Endothelial cell of umbilical vein (primary cell): ENCODE measurements at regions of chr6 and their contacts with region 1.

Region 1: GRCh38 chr6:110682460-110682853 is 132.8 kb downstream of the CDK19 start:
- DNase-seq: peak; percentile 84
- H3K4me3 ChIP-seq: no peak overlapping the region
- H3K27ac ChIP-seq: no peak overlapping the region
- H3K4me1 ChIP-seq: peaks cover 6% of the 10 kb centered on the region
- H3K27me3 ChIP-seq: peaks cover 0 to 1% of the 10 kb centered on the region in 2 experiments
- CTCF ChIP-seq: peak; percentile 37 to 54
- POLR2A ChIP-seq: no peak

Region 2: GRCh38 chr6:110456694-110457093 is 225.8 kb before region 1 on chr6:
- CTCF ChIA-PET with region 1: interaction called, 9 read pairs
- POLR2A ChIA-PET with region 1: no interaction called
- dilution Hi-C with region 1: no loop called
- intact Hi-C with region 1: loop called (anchors 5 kb)
- DNase-seq: no peak
- H3K4me3 ChIP-seq: no peak overlapping the region
- H3K27ac ChIP-seq: no peak overlapping the region
- H3K4me1 ChIP-seq: no peaks in the 10 kb centered on the region
- H3K27me3 ChIP-seq: peaks cover 5 to 22% of the 10 kb centered on the region in 2 experiments
- CTCF ChIP-seq: no peak
- POLR2A ChIP-seq: no peak

Region 3: GRCh38 chr6:110949679-110950285 is 267.3 kb after region 1 on chr6:
- CTCF ChIA-PET with region 1: interaction called, 37 read pairs
- POLR2A ChIA-PET with region 1: no interaction called
- dilution Hi-C with region 1: no loop called
- intact Hi-C with region 1: loop called (anchors 1 kb)
- DNase-seq: peak; percentile 41
- H3K4me3 ChIP-seq: no peak overlapping the region
- H3K27ac ChIP-seq: no peak overlapping the region
- H3K4me1 ChIP-seq: no peaks in the 10 kb centered on the region
- H3K27me3 ChIP-seq: peaks cover 0 to 3% of the 10 kb centered on the region in 2 experiments
- CTCF ChIP-seq: peak in 1 of 2 donors; percentile 26
- POLR2A ChIP-seq: no peak

Region 4: DNA sequence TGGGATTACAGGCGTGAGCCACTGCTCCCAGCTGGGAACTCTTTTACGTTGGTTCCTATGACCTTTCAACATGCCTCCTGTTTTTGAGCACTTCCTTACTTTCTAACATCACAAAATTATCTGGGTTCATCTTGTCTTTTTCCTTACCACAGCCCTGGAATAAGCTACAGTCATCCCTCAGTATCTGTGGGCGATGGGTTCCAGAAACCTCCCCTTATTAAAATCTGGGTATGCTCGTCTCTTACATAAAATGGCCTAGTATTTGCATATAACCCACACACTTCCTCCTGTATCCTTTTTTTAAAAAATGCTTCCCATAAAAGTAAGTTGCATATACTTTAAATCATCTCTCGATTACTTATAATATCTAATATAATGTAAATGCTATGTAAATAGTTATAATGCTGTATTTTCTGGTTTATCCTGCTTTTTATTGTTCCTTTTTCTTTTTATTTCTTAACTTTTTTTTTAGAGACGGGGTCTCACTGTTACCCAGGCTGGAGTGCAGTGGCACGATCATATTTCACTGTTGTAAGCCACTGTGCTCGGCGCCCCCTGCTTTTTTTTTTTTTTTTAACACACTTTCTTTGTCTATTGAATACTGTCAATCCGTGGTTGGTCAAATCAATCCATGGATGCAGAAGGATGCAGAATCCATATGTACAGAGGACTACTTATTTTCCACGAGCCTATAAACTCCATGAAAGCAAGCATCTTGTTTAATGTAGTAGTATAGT is 308.6 kb after region 1 on chr6:
- CTCF ChIA-PET with region 1: interaction called, 10 read pairs
- POLR2A ChIA-PET with region 1: no interaction called
- dilution Hi-C with region 1: no loop called
- intact Hi-C with region 1: no loop called
- DNase-seq: no peak
- H3K4me3 ChIP-seq: no peak overlapping the region
- H3K27ac ChIP-seq: no peak overlapping the region
- H3K4me1 ChIP-seq: no peaks in the 10 kb centered on the region
- H3K27me3 ChIP-seq: no peaks in the 10 kb centered on the region
- CTCF ChIP-seq: no peak
- POLR2A ChIP-seq: no peak

Region 5: DNA sequence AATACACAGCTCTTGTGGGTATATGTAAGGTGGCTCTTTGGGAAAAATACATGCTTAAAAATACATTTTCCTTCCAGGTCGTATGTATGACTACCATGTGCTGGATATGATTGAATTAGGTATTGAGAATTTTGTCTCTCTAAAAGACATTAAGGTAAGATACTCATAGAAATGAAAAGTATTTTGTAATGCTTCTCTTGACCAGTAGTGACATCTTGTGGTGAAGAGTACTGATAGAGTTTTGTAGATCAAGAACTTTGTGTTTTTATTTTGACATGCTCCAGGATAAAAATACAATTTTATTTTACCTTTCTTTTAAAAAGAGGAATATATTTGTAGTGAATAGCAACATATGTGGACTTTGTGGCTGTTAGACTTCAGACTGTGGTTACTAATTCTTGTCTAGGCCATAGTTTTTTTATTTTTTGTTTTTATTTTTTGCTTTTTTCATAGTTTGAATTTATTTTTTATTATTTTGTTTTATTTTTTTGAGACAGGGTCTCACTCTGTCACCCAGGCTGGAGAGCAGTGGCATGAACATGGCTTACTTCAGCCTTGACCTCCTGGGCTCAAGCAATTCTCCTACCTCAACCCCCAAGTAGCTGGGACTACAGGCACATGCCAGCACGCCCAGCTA is 317.3 kb after region 1 on chr6:
- CTCF ChIA-PET with region 1: interaction called, 34 read pairs
- POLR2A ChIA-PET with region 1: no interaction called
- dilution Hi-C with region 1: no loop called
- intact Hi-C with region 1: loop called (anchors 1 kb)
- DNase-seq: peak; percentile 59
- H3K4me3 ChIP-seq: no peak overlapping the region
- H3K27ac ChIP-seq: no peak overlapping the region
- H3K4me1 ChIP-seq: no peaks in the 10 kb centered on the region
- H3K27me3 ChIP-seq: no peaks in the 10 kb centered on the region
- CTCF ChIP-seq: peak in 1 of 2 donors; percentile 10
- POLR2A ChIP-seq: no peak